CD4-positive, alpha-beta T cell (primary cell): ENCODE measurements at regions of chr14 and their contacts with region 1.

Region 1: DNA sequence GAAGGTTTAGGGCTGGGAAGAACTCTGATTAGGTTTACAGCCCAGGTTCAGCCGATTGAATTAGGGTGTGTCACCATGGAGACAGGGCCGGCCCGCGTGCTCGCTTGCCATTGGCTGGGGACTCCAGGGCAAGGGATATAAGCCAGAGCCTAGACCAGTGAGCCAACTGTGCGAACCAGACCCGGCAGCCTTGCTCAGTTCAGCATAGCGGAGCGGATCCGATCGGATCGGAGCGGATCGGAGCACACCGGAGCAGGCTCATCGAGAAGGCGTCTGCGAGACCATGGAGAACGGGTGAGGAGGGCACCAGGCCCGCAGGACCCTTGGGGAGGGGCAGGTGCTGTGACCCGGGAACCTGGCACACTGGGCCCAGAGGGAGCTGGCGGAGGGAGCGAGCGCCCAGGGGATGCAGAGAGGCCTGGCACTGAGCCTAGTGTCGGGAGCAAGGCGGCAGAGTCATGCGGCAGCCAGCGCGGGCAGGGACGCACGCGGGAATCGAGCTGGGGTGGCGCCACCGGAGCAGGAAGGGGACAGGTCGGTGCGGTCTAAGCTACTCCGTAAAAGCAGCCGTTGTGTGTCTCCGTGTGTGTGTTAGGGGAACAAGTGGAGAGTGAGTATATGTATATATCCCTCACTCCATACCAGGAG is at the start of gene PNP:
- DNase-seq: peak; percentile 77 to 96 (median 85)
- ATAC-seq: peak; percentile 88
- H3K4me3 ChIP-seq: peak within 1 kb of the TSS; percentile 95
- H3K4me3 Mint-ChIP-seq: peak within 1 kb of the TSS; percentile 98
- H3K27ac ChIP-seq: peak within 1 kb of the TSS; percentile 78 to 81
- H3K27ac Mint-ChIP-seq: peak within 1 kb of the TSS; percentile 92
- H3K4me1 ChIP-seq: peaks cover 46% of the 10 kb centered on the region
- H3K4me1 Mint-ChIP-seq: peaks cover 50% of the 10 kb centered on the region
- H3K27me3 ChIP-seq: no peaks in the 10 kb centered on the region
- H3K27me3 Mint-ChIP-seq: no peaks in the 10 kb centered on the region
- CTCF ChIP-seq: no peak
- total RNA-seq, gene PNP: 73.6 to 77.2 TPM

Region 2: DNA sequence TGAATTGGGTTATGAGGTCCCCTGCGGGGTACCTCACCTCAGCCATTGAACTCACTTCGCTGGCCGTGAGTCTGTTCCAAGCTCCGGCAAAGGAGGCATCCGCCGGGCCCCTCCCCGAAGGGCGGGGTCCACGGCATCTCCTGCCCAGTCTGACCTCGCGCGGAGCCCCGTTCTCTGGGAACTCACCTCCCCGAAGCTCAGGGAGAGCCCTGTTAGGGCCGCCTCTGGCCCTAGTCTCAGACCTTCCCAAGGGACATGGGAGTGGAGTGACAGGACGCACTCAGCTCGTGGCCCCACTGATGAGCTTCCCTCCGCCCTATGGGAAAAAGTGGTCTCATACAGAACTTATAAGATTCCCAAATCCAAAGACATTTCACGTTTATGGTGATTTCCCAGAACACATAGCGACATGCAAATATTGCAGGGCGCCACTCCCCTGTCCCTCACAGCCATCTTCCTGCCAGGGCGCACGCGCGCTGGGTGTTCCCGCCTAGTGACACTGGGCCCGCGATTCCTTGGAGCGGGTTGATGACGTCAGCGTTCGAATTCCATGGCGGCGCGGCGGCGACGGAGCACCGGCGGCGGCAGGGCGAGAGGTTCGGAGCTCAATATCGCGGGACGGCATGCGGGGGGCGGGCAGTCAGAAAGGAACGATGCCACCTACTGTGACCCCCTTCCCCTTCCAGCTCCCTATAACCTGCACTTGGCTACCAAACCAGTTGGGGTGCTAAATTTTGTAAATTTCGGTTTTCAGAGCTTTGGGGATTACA is 126.1 kb before region 1 on chr14 and contains the start of gene PARP2:
- CTCF ChIA-PET with region 1: no interaction called
- POLR2A ChIA-PET with region 1: interaction called, 8 read pairs
- intact Hi-C with region 1: loop called in 1 of 2 experiments (anchors 5 kb)
- DNase-seq: peak; percentile 70 to 97 (median 82)
- ATAC-seq: peak; percentile 81
- H3K4me3 ChIP-seq: peak within 1 kb of the TSS; percentile 83
- H3K4me3 Mint-ChIP-seq: peak within 1 kb of the TSS; percentile 99
- H3K27ac ChIP-seq: peak within 1 kb of the TSS; percentile 92 to 95
- H3K27ac Mint-ChIP-seq: peak within 1 kb of the TSS; percentile 97
- H3K4me1 ChIP-seq: no peaks in the 10 kb centered on the region
- H3K4me1 Mint-ChIP-seq: peaks cover 11% of the 10 kb centered on the region
- H3K27me3 ChIP-seq: no peaks in the 10 kb centered on the region
- H3K27me3 Mint-ChIP-seq: no peaks in the 10 kb centered on the region
- CTCF ChIP-seq: no peak
- total RNA-seq, gene PARP2: 16.3 to 20.4 TPM

Region 3: GRCh38 chr14:20489093-20489994 is 20.0 kb after region 1 on chr14:
- CTCF ChIA-PET with region 1: no interaction called
- POLR2A ChIA-PET with region 1: interaction called, 12 read pairs
- intact Hi-C with region 1: no loop called
- DNase-seq: peak in 6 of 14 experiments; percentile 10 to 58 (median 14)
- ATAC-seq: peak; percentile 83
- H3K4me3 ChIP-seq: no peak overlapping the region
- H3K4me3 Mint-ChIP-seq: peak overlapping the region; percentile 69
- H3K27ac ChIP-seq: peak overlapping the region in 1 of 2 donors; percentile 19
- H3K27ac Mint-ChIP-seq: peak overlapping the region; percentile 84
- H3K4me1 ChIP-seq: peaks cover 58% of the 10 kb centered on the region
- H3K4me1 Mint-ChIP-seq: peaks cover 83% of the 10 kb centered on the region
- H3K27me3 ChIP-seq: no peaks in the 10 kb centered on the region
- H3K27me3 Mint-ChIP-seq: no peaks in the 10 kb centered on the region
- CTCF ChIP-seq: no peak

Region 4: GRCh38 chr14:20522332-20522731 is 53.0 kb after region 1 on chr14:
- CTCF ChIA-PET with region 1: no interaction called
- POLR2A ChIA-PET with region 1: no interaction called
- intact Hi-C with region 1: loop called in 1 of 2 experiments (anchors 5 kb)
- DNase-seq: no peak
- ATAC-seq: no peak
- H3K4me3 ChIP-seq: no peak overlapping the region
- H3K4me3 Mint-ChIP-seq: no peak overlapping the region
- H3K27ac ChIP-seq: no peak overlapping the region
- H3K27ac Mint-ChIP-seq: no peak overlapping the region
- H3K4me1 ChIP-seq: no peaks in the 10 kb centered on the region
- H3K4me1 Mint-ChIP-seq: no peaks in the 10 kb centered on the region
- H3K27me3 ChIP-seq: no peaks in the 10 kb centered on the region
- H3K27me3 Mint-ChIP-seq: no peaks in the 10 kb centered on the region
- CTCF ChIP-seq: no peak

Region 5: GRCh38 chr14:20530771-20531571 is 61.6 kb after region 1 on chr14:
- CTCF ChIA-PET with region 1: no interaction called
- POLR2A ChIA-PET with region 1: interaction called, 6 read pairs
- intact Hi-C with region 1: loop called in 1 of 2 experiments (anchors 2 kb)
- DNase-seq: peak; percentile 51 to 86 (median 64)
- ATAC-seq: peak; percentile 67
- H3K4me3 ChIP-seq: no peak overlapping the region
- H3K4me3 Mint-ChIP-seq: no peak overlapping the region
- H3K27ac ChIP-seq: no peak overlapping the region
- H3K27ac Mint-ChIP-seq: no peak overlapping the region
- H3K4me1 ChIP-seq: peaks cover 3% of the 10 kb centered on the region
- H3K4me1 Mint-ChIP-seq: peaks cover 7% of the 10 kb centered on the region
- H3K27me3 ChIP-seq: no peaks in the 10 kb centered on the region
- H3K27me3 Mint-ChIP-seq: peaks cover 5% of the 10 kb centered on the region
- CTCF ChIP-seq: peak; percentile 70